ENCODE measurements at regions of chr17 and their contacts with region 1.

Region 1: DNA sequence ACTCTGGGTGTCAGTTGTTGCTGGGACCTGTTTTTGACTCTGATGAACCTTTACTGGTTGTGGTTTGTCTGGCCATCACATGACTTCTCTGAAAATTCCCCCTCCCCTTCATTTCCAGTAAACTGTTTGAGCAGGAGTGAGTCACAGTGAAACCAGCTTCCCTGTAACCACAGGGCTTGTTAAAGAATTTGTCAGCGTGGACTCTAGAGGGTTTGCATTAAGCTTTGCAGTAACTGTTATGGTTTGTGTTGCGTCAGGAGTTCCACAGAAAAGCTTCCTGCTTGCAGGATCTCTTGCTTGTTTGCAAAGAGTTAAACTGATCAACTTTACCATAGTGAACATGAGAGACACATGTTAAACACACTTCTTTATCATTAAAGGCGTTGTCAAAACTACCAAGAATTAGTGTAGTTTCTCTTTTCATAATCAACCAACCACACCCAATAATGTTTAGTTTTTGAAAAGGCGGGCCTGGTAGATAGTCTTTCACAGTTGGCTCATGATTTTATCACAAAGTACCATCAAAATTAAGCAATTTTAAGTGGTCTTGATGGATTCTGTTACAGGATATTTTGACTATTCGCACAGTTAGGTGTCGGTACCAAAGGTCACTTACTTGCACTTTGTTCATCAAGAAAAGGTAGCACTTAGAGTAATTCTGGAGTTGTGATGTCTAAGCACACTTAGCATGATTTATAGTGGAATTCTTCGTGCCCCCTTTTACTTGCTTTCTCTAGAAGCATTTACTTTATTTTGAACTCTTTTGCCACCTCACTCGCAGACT is 79.3 kb downstream of the VMP1 start:
- DNase-seq: peak; percentile 89
- H3K4me3 Mint-ChIP-seq: peak overlapping the region; percentile 79
- H3K27ac Mint-ChIP-seq: peak overlapping the region; percentile 97
- H3K4me1 Mint-ChIP-seq: peaks cover 63% of the 10 kb centered on the region
- H3K27me3 Mint-ChIP-seq: no peaks in the 10 kb centered on the region

Region 2: GRCh38 chr17:59676716-59677115 is 110.0 kb before region 1 on chr17:
- CTCF ChIA-PET with region 1: no interaction called
- POLR2A ChIA-PET with region 1: no interaction called
- DNase-seq: no peak
- H3K4me3 Mint-ChIP-seq: no peak overlapping the region
- H3K27ac Mint-ChIP-seq: no peak overlapping the region
- H3K4me1 Mint-ChIP-seq: peaks cover 6% of the 10 kb centered on the region
- H3K27me3 Mint-ChIP-seq: no peaks in the 10 kb centered on the region

Region 3: DNA sequence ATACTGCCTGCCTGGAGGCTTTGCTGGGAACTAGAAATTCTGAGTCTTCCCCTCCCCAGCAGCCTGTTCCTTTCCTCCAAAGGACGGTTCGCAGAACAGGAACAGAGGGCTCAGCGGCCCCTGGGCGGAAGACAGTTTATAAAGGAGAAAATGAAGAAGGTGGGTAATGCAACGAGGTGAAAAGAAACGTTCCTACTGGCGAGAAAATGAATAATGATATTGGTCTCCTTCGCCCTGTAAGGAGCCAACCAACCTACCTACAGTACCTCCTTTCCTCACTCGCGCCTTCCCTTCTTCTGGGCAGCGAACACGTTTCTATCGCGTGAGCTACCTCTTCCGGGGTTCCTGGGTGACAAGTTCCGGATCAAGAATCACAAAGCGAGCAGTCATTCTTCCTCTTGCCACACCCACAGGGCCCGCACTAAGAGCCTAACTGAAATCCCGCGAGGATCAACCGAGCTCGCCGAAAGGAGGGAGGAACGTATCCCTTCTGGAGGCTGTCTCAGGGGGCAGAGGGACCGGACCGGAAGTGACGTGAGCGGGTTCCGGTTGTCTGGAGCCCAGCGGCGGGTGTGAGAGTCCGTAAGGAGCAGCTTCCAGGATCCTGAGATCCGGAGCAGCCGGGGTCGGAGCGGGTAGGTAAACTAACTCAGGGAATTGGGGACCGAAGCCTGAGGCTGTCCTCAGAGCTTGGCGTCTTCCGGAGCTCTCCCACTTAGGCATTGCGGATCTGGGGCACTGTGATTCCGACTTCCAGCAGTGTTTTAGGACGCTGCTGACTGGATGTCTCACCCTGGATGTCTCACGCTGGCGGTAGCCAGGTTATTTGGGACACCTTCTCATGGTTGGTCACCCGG is 79.4 kb before region 1 on chr17 and contains the starts of genes PTRH2 and VMP1:
- CTCF ChIA-PET with region 1: no interaction called
- POLR2A ChIA-PET with region 1: interaction called, 18 read pairs
- DNase-seq: peak; percentile 95
- H3K4me3 Mint-ChIP-seq: peak within 1 kb of the TSS; percentile 98
- H3K27ac Mint-ChIP-seq: peak within 1 kb of the TSS; percentile 91
- H3K4me1 Mint-ChIP-seq: peaks cover 50% of the 10 kb centered on the region
- H3K27me3 Mint-ChIP-seq: no peaks in the 10 kb centered on the region
- total RNA-seq, gene PTRH2: 22.8 to 23.3 TPM
- total RNA-seq, gene VMP1: 398 to 408 TPM

Region 4: GRCh38 chr17:59762513-59763374 is 24.0 kb before region 1 on chr17:
- CTCF ChIA-PET with region 1: interaction called, 8 read pairs
- POLR2A ChIA-PET with region 1: interaction called, 188 read pairs
- DNase-seq: no peak
- H3K4me3 Mint-ChIP-seq: peak overlapping the region; percentile 11
- H3K27ac Mint-ChIP-seq: peak overlapping the region; percentile 83
- H3K4me1 Mint-ChIP-seq: peaks cover 49% of the 10 kb centered on the region
- H3K27me3 Mint-ChIP-seq: no peaks in the 10 kb centered on the region

Region 5: DNA sequence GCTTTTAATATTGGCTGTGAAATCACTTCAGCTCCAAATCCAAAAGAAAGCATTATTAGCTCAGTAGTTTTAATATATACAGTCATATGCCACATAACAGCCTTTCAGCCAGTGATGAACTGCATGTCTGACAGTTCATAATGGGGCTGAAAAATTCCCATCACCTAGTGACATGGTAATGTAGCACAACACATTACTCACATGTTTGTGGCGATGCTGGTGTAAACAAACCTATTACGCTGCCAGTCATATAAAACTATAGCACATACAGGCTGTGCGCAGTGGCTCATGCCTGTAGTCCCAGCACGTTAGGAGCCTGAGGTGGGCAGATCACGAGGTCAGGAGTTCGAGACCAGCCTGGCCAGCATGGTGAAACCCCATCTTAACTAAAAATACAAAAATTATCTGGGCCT is 13.8 kb after region 1 on chr17:
- CTCF ChIA-PET with region 1: interaction called, 4 read pairs
- POLR2A ChIA-PET with region 1: interaction called, 84 read pairs
- DNase-seq: no peak
- H3K4me3 Mint-ChIP-seq: no peak overlapping the region
- H3K27ac Mint-ChIP-seq: no peak overlapping the region
- H3K4me1 Mint-ChIP-seq: peaks cover 44% of the 10 kb centered on the region
- H3K27me3 Mint-ChIP-seq: no peaks in the 10 kb centered on the region

Region 6: GRCh38 chr17:59829217-59830006 is 42.7 kb after region 1 on chr17:
- CTCF ChIA-PET with region 1: interaction called, 62 read pairs
- POLR2A ChIA-PET with region 1: interaction called, 2,499 read pairs
- DNase-seq: peak; percentile 62
- H3K4me3 Mint-ChIP-seq: peak overlapping the region; percentile 77
- H3K27ac Mint-ChIP-seq: peak overlapping the region; percentile 96
- H3K4me1 Mint-ChIP-seq: peaks cover 77% of the 10 kb centered on the region
- H3K27me3 Mint-ChIP-seq: no peaks in the 10 kb centered on the region

Region 7: DNA sequence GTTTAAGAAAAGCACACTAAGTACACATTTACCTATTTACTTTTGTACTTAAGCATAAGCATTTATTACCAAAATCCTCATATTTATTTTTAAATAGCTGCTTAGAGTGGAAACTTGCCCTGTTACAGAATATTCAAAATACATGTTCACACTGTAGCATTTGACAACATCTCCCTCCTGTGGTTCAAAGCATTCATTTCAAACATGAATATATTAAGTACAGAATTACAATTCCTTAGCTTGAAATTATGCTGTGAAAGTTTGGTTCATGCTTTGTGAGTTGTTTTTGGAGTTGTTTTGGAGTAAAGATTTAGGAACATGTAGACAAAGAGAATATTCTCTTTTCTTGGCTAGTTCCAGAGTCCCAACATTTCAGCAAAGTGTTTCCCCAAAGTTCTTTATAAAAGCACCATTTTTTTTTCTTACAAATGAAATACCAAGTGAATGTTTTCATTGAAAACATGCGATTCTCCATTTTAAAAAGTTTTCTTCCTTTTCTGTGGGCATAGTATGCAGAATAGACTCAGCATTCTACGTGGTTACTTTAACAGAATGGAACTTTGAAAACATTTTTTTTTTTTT is 72.8 kb after region 1 on chr17:
- CTCF ChIA-PET with region 1: interaction called, 17 read pairs
- POLR2A ChIA-PET with region 1: no interaction called
- DNase-seq: no peak
- H3K4me3 Mint-ChIP-seq: no peak overlapping the region
- H3K27ac Mint-ChIP-seq: no peak overlapping the region
- H3K4me1 Mint-ChIP-seq: peaks cover 13% of the 10 kb centered on the region
- H3K27me3 Mint-ChIP-seq: no peaks in the 10 kb centered on the region

Measured in activated CD4-positive, alpha-beta memory T cell treated with anti-CD3 and anti-CD28 coated beads, Interleukin-2, amount 10 ng/mL, durations not matched to agents 7 days and 5 days (primary cell).